ENCODE measurements at regions of chr1 and their contacts with region 1.

Region 1: GRCh38 chr1:31422505-31423319 is 9.7 kb downstream of the SERINC2 start:
- DNase-seq: peak; percentile 47
- ATAC-seq: peak; percentile 71
- H3K4me3 ChIP-seq: peak overlapping the region; percentile 29; the same call in 1 of the 2 replicates
- H3K27ac ChIP-seq: no peak overlapping the region
- H3K4me1 ChIP-seq: peaks cover 11% of the 10 kb centered on the region
- H3K27me3 ChIP-seq: no peaks in the 10 kb centered on the region
- CTCF ChIP-seq: peak; percentile 94 to 96 (median 95)
- EP300 ChIP-seq: no peak
- POLR2A ChIP-seq: no peak
- RAD21 ChIP-seq: peak; percentile 80

Region 2: DNA sequence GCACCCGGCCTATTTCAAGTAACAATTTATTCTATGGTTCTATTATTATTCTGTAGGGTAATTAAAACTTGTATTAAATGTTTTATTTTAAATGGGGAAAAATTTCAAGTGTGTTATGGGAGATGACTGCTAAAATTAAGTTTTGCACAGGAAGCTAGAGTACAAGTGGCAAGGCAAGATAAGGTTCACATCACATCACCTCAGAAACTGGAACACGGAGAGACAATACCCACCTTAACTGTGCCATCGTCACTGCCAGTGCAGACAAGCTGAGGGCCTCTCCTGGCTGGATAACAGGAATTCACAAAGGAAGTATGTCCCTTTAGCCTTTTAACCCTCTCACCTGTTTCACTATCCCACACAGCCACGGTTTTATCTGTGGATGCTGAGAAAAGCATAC is 133.7 kb before region 1 on chr1:
- CTCF ChIA-PET with region 1: no interaction called
- POLR2A ChIA-PET with region 1: no interaction called
- RAD21 ChIA-PET with region 1: no interaction called
- SMC1A ChIA-PET with region 1: no interaction called
- in situ Hi-C with region 1: no loop called
- intact Hi-C with region 1: no loop called
- DNase-seq: no peak
- ATAC-seq: no peak
- H3K4me3 ChIP-seq: no peak overlapping the region
- H3K27ac ChIP-seq: no peak overlapping the region
- H3K4me1 ChIP-seq: no peaks in the 10 kb centered on the region
- H3K27me3 ChIP-seq: no peaks in the 10 kb centered on the region
- CTCF ChIP-seq: no peak
- EP300 ChIP-seq: no peak
- POLR2A ChIP-seq: no peak
- RAD21 ChIP-seq: no peak

Region 3: GRCh38 chr1:31372961-31373896 is 49.5 kb before region 1 on chr1 and contains the start of gene FABP3:
- CTCF ChIA-PET with region 1: interaction called, 13 read pairs
- POLR2A ChIA-PET with region 1: interaction called, 4 read pairs
- RAD21 ChIA-PET with region 1: interaction called, 7 read pairs
- SMC1A ChIA-PET with region 1: interaction called, 4 read pairs
- in situ Hi-C with region 1: no loop called
- intact Hi-C with region 1: no loop called
- DNase-seq: no peak
- ATAC-seq: peak; percentile 83
- H3K4me3 ChIP-seq: peak within 1 kb of the TSS; percentile 52
- H3K27ac ChIP-seq: no peak within 1 kb of the TSS
- H3K4me1 ChIP-seq: no peaks in the 10 kb centered on the region
- H3K27me3 ChIP-seq: no peaks in the 10 kb centered on the region
- CTCF ChIP-seq: 0 out of 6 replicates have a peak, but pooled peaks of 1 of the 3 experiments have one; percentile 2
- EP300 ChIP-seq: no peak
- POLR2A ChIP-seq: no peak
- RAD21 ChIP-seq: no peak
- polyA plus RNA-seq, gene FABP3: 0.72 to 1.2 TPM

Region 4: GRCh38 chr1:31444725-31445448 is 22.2 kb after region 1 on chr1:
- CTCF ChIA-PET with region 1: interaction called, 41 read pairs
- POLR2A ChIA-PET with region 1: interaction called, 5 read pairs
- RAD21 ChIA-PET with region 1: interaction called, 8 read pairs
- SMC1A ChIA-PET with region 1: interaction called, 15 read pairs
- in situ Hi-C with region 1: no loop called
- intact Hi-C with region 1: no loop called
- DNase-seq: no peak
- ATAC-seq: no peak
- H3K4me3 ChIP-seq: no peak overlapping the region
- H3K27ac ChIP-seq: no peak overlapping the region
- H3K4me1 ChIP-seq: no peaks in the 10 kb centered on the region
- H3K27me3 ChIP-seq: no peaks in the 10 kb centered on the region
- CTCF ChIP-seq: no peak
- EP300 ChIP-seq: no peak
- POLR2A ChIP-seq: no peak
- RAD21 ChIP-seq: no peak

Region 5: GRCh38 chr1:31483012-31483946 is 60.6 kb after region 1 on chr1:
- CTCF ChIA-PET with region 1: interaction called, 8 read pairs
- POLR2A ChIA-PET with region 1: interaction called, 5 read pairs
- RAD21 ChIA-PET with region 1: interaction called, 6 read pairs
- SMC1A ChIA-PET with region 1: interaction called, 10 read pairs
- in situ Hi-C with region 1: no loop called
- intact Hi-C with region 1: loop called (anchors 2 kb)
- DNase-seq: peak; percentile 58
- ATAC-seq: peak; percentile 91
- H3K4me3 ChIP-seq: no peak overlapping the region
- H3K27ac ChIP-seq: peak overlapping the region; percentile 57
- H3K4me1 ChIP-seq: no peaks in the 10 kb centered on the region
- H3K27me3 ChIP-seq: no peaks in the 10 kb centered on the region
- CTCF ChIP-seq: no peak
- EP300 ChIP-seq: peak in 1 of 2 experiments; percentile 87; a peak in 3 of 4 replicates
- POLR2A ChIP-seq: no peak
- RAD21 ChIP-seq: no peak

Region 6: DNA sequence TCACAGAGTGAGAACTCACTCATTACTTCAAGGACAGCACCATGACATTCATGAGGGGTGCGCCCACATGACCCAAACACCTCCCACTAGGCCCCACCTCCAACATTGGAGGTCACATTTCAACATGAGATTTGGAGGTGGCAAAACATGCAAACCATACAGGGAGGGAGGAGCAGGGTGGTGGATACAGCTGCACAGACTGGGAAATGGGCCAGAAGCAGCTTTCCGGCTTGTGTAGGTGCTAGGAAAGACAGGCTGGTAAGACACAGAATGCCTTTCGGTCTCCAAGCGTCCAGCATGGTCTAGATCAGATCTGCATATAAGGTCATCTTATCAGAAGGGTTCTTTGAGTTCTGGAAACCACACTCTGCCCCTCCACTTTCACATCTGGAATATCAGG is 118.5 kb after region 1 on chr1:
- CTCF ChIA-PET with region 1: interaction called, 18 read pairs
- POLR2A ChIA-PET with region 1: no interaction called
- RAD21 ChIA-PET with region 1: interaction called, 10 read pairs
- SMC1A ChIA-PET with region 1: interaction called, 12 read pairs
- in situ Hi-C with region 1: loop called (anchors 10 kb)
- intact Hi-C with region 1: no loop called
- DNase-seq: no peak
- ATAC-seq: no peak
- H3K4me3 ChIP-seq: no peak overlapping the region
- H3K27ac ChIP-seq: no peak overlapping the region
- H3K4me1 ChIP-seq: no peaks in the 10 kb centered on the region
- H3K27me3 ChIP-seq: no peaks in the 10 kb centered on the region
- CTCF ChIP-seq: no peak
- EP300 ChIP-seq: no peak
- POLR2A ChIP-seq: no peak
- RAD21 ChIP-seq: no peak

Region 7: GRCh38 chr1:31617917-31618660 is 195.4 kb after region 1 on chr1:
- CTCF ChIA-PET with region 1: interaction called, 12 read pairs
- POLR2A ChIA-PET with region 1: no interaction called
- RAD21 ChIA-PET with region 1: no interaction called
- SMC1A ChIA-PET with region 1: interaction called, 3 read pairs
- in situ Hi-C with region 1: no loop called
- intact Hi-C with region 1: no loop called
- DNase-seq: no peak
- ATAC-seq: peak; percentile 91
- H3K4me3 ChIP-seq: no peak overlapping the region
- H3K27ac ChIP-seq: no peak overlapping the region
- H3K4me1 ChIP-seq: no peaks in the 10 kb centered on the region; the same call in 1 of the 2 replicates
- H3K27me3 ChIP-seq: no peaks in the 10 kb centered on the region; a peak in 2 of 4 replicates
- CTCF ChIP-seq: peak; percentile 71 to 93 (median 71)
- EP300 ChIP-seq: no peak
- POLR2A ChIP-seq: no peak
- RAD21 ChIP-seq: peak; percentile 64

Region 8: DNA sequence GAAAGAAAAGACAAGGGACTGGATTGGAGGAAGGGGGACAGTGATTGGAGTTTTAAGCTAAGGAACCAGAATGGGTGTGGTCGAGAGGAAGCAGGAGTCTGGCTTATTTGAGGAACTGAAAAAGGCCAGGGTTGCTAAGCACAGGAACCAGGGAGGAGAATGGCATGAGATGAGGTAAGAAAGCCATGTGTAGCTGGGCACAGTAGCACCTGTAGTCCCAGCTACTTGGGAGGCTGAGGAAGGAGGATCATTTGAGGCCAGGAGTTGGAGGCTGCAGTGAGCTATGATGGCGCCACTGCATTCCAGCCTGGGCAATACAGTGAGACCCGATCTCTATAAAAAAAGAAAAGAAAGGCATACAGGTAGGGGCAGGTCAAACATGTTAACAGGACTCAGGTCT is 582.8 kb after region 1 on chr1:
- CTCF ChIA-PET with region 1: no interaction called
- POLR2A ChIA-PET with region 1: no interaction called
- RAD21 ChIA-PET with region 1: no interaction called
- SMC1A ChIA-PET with region 1: no interaction called
- in situ Hi-C with region 1: no loop called
- intact Hi-C with region 1: no loop called
- DNase-seq: peak; percentile 43
- ATAC-seq: peak; percentile 88
- H3K4me3 ChIP-seq: no peak overlapping the region
- H3K27ac ChIP-seq: no peak overlapping the region
- H3K4me1 ChIP-seq: peaks cover 25% of the 10 kb centered on the region
- H3K27me3 ChIP-seq: no peaks in the 10 kb centered on the region
- CTCF ChIP-seq: no peak
- EP300 ChIP-seq: no peak
- POLR2A ChIP-seq: no peak
- RAD21 ChIP-seq: no peak

Measured in GM12878 (cell line).